ENCODE measurements at regions of chr20 and their contacts with region 1.

Region 1: GRCh38 chr20:31560094-31560899 is 44.8 kb upstream of the ID1 start:
- DNase-seq: peak; percentile 92
- H3K4me3 Mint-ChIP-seq: peak overlapping the region; percentile 49
- H3K27ac Mint-ChIP-seq: peak overlapping the region; percentile 98
- H3K4me1 Mint-ChIP-seq: peaks cover 57% of the 10 kb centered on the region
- H3K27me3 Mint-ChIP-seq: no peaks in the 10 kb centered on the region
- CTCF ChIP-seq: peak; percentile 99

Region 2: GRCh38 chr20:31322504-31322903 is 237.8 kb before region 1 on chr20:
- CTCF ChIA-PET with region 1: no interaction called
- intact Hi-C with region 1: no loop called
- DNase-seq: no peak
- H3K4me3 Mint-ChIP-seq: no peak overlapping the region
- H3K27ac Mint-ChIP-seq: no peak overlapping the region
- H3K4me1 Mint-ChIP-seq: no peaks in the 10 kb centered on the region
- H3K27me3 Mint-ChIP-seq: peaks cover 32% of the 10 kb centered on the region
- CTCF ChIP-seq: no peak

Region 3: DNA sequence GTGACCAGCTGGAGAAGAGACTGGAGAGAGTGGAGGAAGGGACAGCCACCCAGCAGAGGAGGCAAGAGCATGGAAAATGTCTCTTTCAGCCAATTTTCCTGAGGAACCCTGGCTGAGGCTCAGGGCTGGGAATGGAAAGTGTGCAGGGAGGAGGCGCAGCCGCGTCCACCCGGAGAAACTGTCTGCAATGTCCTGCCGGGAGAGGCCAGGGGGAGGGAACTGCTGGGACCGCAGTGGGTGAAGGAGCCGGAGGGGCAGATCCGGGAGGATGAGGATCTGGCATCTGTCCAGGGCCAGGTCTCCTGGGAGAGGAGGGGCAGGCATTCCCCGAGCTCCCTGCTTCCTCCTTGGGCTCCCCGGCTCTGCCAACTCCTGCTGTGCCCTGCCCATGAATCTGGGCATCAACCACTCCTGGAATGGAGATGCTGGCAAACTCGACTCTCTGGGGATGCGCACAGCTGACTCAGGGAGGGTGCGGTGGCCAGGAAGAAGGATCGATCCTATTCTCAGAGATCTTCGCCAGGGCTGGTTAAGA is 63.5 kb before region 1 on chr20:
- CTCF ChIA-PET with region 1: no interaction called
- intact Hi-C with region 1: no loop called
- DNase-seq: peak; percentile 44
- H3K4me3 Mint-ChIP-seq: no peak overlapping the region
- H3K27ac Mint-ChIP-seq: no peak overlapping the region
- H3K4me1 Mint-ChIP-seq: peaks cover 8% of the 10 kb centered on the region
- H3K27me3 Mint-ChIP-seq: peaks cover 74% of the 10 kb centered on the region
- CTCF ChIP-seq: no peak

Region 4: DNA sequence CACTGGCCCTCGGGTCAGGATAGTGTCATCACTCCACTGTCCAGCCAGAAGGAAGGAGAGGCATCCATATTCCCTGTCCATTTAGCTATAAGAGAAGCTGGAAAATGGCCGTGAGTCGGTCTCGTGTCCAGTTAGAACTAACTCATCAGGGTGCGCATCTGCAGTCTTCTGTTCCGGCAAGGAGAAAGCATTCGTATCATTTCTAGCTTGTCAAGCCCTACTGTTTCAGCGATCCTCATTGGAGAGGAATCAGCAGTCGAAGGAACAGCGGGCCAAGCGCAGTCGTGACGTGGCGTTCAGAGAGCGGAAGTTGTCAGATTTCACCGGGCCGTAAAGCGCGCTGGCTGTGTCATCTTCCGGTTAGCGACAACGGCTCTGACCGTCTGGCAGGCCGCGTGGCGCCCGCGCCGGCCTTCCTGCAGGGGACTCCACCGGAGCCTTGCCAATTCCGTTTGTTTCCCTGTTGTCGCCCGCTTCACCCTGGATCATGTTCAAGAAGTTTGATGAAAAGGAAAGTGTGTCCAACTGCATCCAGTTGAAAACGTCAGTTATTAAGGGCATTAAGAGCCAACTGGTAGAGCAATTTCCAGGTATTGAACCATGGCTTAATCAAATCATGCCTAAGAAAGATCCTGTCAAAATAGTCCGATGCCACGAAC is 13.2 kb before region 1 on chr20:
- CTCF ChIA-PET with region 1: interaction called, 11 read pairs
- intact Hi-C with region 1: no loop called
- DNase-seq: peak; percentile 95
- H3K4me3 Mint-ChIP-seq: peak overlapping the region; percentile 97
- H3K27ac Mint-ChIP-seq: peak overlapping the region; percentile 100
- H3K4me1 Mint-ChIP-seq: peaks cover 24% of the 10 kb centered on the region
- H3K27me3 Mint-ChIP-seq: no peaks in the 10 kb centered on the region
- CTCF ChIP-seq: peak; percentile 31

Region 5: GRCh38 chr20:31572701-31573554 is 12.6 kb after region 1 on chr20:
- CTCF ChIA-PET with region 1: interaction called, 26 read pairs
- intact Hi-C with region 1: no loop called
- DNase-seq: peak; percentile 100
- H3K4me3 Mint-ChIP-seq: peak overlapping the region; percentile 89
- H3K27ac Mint-ChIP-seq: peak overlapping the region; percentile 98
- H3K4me1 Mint-ChIP-seq: peaks cover 58% of the 10 kb centered on the region
- H3K27me3 Mint-ChIP-seq: no peaks in the 10 kb centered on the region
- CTCF ChIP-seq: peak; percentile 12

Region 6: DNA sequence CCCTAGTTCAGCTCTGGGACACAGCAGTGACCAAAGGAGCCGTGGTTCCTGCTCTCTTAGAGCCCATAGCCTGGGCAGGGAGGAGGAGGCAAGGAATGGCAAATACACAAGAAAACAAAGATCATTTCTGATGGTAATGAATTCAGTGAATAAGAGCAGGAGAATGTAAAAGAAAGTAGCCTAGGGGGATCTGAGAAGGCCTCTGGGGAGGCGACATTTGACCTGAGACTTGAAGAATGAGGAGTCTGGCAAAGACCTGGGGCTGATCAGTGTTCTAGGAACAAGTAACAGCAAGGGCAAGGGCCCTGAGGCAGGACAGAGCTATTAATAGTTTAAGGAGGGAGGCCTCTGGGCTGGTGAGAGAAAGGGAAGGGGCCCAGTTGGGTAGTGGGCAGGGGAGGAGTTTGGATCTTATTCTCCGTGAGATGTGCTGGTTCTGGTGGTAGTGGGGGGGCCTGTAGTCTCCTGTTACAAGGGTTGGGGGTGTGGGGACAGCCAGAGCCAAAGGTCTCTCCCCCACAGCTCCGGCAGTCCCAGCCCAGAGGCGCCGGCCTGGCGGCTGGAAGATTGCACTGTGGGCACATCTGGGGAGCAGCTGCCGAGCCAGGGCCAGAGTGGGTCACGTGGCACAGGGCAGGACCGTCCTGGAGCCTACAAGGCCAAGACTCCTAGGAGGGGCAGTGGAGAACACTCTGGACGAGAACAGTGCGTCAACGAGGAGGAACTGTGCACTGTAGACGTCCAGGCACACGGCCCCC is 35.5 kb after region 1 on chr20:
- CTCF ChIA-PET with region 1: interaction called, 27 read pairs
- intact Hi-C with region 1: loop called (anchors 2 kb)
- DNase-seq: peak; percentile 68
- H3K4me3 Mint-ChIP-seq: peak overlapping the region; percentile 75
- H3K27ac Mint-ChIP-seq: peak overlapping the region; percentile 80
- H3K4me1 Mint-ChIP-seq: peaks cover 48% of the 10 kb centered on the region
- H3K27me3 Mint-ChIP-seq: no peaks in the 10 kb centered on the region
- CTCF ChIP-seq: no peak

Region 7: DNA sequence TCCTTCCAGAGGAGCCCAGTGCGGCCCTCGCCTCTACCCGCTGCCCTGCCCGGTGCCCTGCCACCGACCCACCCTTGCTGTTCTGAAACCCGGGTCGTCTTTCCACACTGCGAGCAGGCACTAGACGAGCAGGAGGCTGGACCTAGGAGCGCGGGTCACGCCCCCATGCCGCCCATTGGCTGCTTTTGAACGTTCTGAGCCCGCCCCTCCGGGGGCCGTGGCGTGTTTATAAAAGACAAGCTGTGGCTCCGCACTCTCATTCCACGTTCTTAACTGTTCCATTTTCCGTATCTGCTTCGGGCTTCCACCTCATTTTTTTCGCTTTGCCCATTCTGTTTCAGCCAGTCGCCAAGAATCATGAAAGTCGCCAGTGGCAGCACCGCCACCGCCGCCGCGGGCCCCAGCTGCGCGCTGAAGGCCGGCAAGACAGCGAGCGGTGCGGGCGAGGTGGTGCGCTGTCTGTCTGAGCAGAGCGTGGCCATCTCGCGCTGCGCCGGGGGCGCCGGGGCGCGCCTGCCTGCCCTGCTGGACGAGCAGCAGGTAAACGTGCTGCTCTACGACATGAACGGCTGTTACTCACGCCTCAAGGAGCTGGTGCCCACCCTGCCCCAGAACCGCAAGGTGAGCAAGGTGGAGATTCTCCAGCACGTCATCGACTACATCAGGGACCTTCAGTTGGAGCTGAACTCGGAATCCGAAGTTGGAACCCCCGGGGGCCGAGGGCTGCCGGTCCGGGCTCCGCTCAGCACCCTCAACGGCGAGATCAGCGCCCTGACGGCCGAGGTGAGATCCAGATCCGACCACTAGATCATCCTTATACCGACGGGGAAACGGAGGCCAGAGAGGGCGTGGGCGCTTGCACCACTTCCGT is 45.0 kb after region 1 on chr20 and contains the start of gene ID1:
- CTCF ChIA-PET with region 1: interaction called, 1,048 read pairs
- intact Hi-C with region 1: no loop called
- DNase-seq: peak; percentile 99
- H3K4me3 Mint-ChIP-seq: peak within 1 kb of the TSS; percentile 98
- H3K27ac Mint-ChIP-seq: peak within 1 kb of the TSS; percentile 96
- H3K4me1 Mint-ChIP-seq: peaks cover 33% of the 10 kb centered on the region
- H3K27me3 Mint-ChIP-seq: peaks cover 11% of the 10 kb centered on the region
- CTCF ChIP-seq: no peak
- total RNA-seq, gene ID1: 347 and 431 TPM in 2 replicates

Region 8: GRCh38 chr20:31630187-31630790 is 70.0 kb after region 1 on chr20:
- CTCF ChIA-PET with region 1: interaction called, 11 read pairs
- intact Hi-C with region 1: no loop called
- DNase-seq: no peak
- H3K4me3 Mint-ChIP-seq: no peak overlapping the region
- H3K27ac Mint-ChIP-seq: no peak overlapping the region
- H3K4me1 Mint-ChIP-seq: no peaks in the 10 kb centered on the region
- H3K27me3 Mint-ChIP-seq: no peaks in the 10 kb centered on the region
- CTCF ChIP-seq: no peak

Region 9: GRCh38 chr20:31642837-31643236 is 82.5 kb after region 1 on chr20:
- CTCF ChIA-PET with region 1: no interaction called
- intact Hi-C with region 1: no loop called
- DNase-seq: no peak
- H3K4me3 Mint-ChIP-seq: no peak overlapping the region
- H3K27ac Mint-ChIP-seq: no peak overlapping the region
- H3K4me1 Mint-ChIP-seq: no peaks in the 10 kb centered on the region
- H3K27me3 Mint-ChIP-seq: peaks cover 13% of the 10 kb centered on the region
- CTCF ChIP-seq: no peak

Region 10: DNA sequence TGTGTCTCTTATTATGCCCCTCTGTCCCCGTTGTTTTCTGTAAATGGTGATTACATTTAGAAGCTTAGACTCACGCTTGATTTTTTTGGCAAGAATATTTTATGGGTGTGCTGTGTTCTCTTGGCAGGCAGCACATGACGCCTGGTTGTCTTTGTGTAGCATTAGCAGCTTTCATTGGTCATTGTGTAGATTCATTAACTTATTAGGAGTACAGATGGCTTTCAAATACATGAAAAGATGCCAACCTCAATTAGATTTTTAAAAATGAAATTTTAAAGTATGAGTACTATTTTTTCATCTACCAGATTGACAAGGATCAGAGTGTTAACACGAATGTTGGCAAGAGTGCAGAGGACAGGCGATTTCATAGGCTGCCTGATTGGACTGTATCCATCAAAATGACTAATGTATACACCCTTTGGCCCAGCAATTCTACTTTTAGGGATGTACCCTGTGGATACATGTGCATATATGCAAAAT is 92.7 kb after region 1 on chr20:
- CTCF ChIA-PET with region 1: no interaction called
- intact Hi-C with region 1: no loop called
- DNase-seq: no peak
- H3K4me3 Mint-ChIP-seq: no peak overlapping the region
- H3K27ac Mint-ChIP-seq: no peak overlapping the region
- H3K4me1 Mint-ChIP-seq: no peaks in the 10 kb centered on the region
- H3K27me3 Mint-ChIP-seq: peaks cover 15% of the 10 kb centered on the region
- CTCF ChIP-seq: no peak